Left lung (tissue), 14 donors: ENCODE measurements at regions of chr14 and their contacts with region 1.

Region 1: GRCh38 chr14:55097881-55098560 is 31.0 kb upstream of the LGALS3 start:
- DNase-seq: peak in 1 of 4 donors; percentile 77
- ATAC-seq: peak; percentile 57
- H3K4me3 ChIP-seq: no peak overlapping the region
- H3K27ac ChIP-seq: peak overlapping the region; percentile 69 to 78
- H3K4me1 ChIP-seq: peaks cover 36 to 58% of the 10 kb centered on the region in 2 donors
- H3K27me3 ChIP-seq: no peaks in the 10 kb centered on the region
- CTCF ChIP-seq: no peak

Region 2: GRCh38 chr14:55146425-55146824 is 48.4 kb after region 1 on chr14:
- intact Hi-C with region 1: loop called in 1 of 2 experiments (anchors 10 kb)
- DNase-seq: no peak
- ATAC-seq: no peak
- H3K4me3 ChIP-seq: no peak overlapping the region
- H3K27ac ChIP-seq: no peak overlapping the region
- H3K4me1 ChIP-seq: no peaks in the 10 kb centered on the region
- H3K27me3 ChIP-seq: no peaks in the 10 kb centered on the region
- CTCF ChIP-seq: no peak

Region 3: GRCh38 chr14:55160989-55161388 is 63.0 kb after region 1 on chr14:
- intact Hi-C with region 1: loop called in 1 of 2 experiments (anchors 5 kb)
- DNase-seq: peak in 2 of 4 donors; percentile 12 to 34
- ATAC-seq: peak; percentile 90
- H3K4me3 ChIP-seq: no peak overlapping the region
- H3K27ac ChIP-seq: no peak overlapping the region
- H3K4me1 ChIP-seq: no peaks in the 10 kb centered on the region
- H3K27me3 ChIP-seq: no peaks in the 10 kb centered on the region
- CTCF ChIP-seq: peak; percentile 41 to 66

Region 4: GRCh38 chr14:55514819-55515490 is 416.9 kb after region 1 on chr14:
- intact Hi-C with region 1: no loop called
- DNase-seq: no peak
- ATAC-seq: no peak
- H3K4me3 ChIP-seq: no peak overlapping the region
- H3K27ac ChIP-seq: no peak overlapping the region
- H3K4me1 ChIP-seq: no peaks in the 10 kb centered on the region
- H3K27me3 ChIP-seq: no peaks in the 10 kb centered on the region
- CTCF ChIP-seq: no peak